Common myeloid progenitor, CD34-positive (primary cell): ENCODE measurements at regions of chr1 and their contacts with region 1.

Region 1: DNA sequence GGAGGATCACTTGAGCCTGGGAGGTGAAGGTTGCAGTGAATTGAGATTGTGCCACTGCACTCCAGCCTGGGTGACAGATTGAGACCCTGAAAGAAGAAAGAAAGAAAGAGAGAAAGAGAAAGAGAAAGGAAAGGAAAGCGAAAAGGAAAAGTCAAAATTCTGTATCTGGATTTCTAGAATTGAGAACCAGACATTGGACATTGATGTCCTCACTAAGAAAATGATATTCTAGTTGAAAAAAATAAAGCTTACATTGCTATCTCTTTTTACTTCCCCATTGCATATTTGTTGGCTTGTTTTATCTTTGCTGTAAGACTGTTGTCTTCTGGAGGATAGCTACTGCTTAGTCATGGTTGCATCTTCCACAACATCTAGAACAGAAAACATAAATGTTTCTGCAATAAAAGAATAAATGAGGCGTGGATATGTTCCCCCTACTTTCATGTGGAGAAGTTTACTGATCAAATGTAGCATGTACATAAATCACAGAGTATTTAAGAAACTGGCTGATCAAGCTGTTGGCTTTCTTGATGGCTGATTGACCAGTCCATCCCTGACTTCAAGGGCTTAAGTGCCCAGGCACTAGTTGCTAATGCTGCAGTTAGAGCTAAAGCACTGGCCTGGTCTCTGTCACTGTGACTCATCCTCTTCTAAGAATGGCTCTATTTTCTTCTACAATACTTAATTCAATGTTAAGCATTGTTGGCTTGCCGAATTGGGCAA is 17.7 kb downstream of the CD53 start:
- DNase-seq: peak in 2 of 3 donors; percentile 52 to 74
- H3K4me3 ChIP-seq: peak overlapping the region in 1 of 7 experiments; percentile 2
- H3K27ac ChIP-seq: peak overlapping the region in 1 of 2 experiments; percentile 50
- H3K4me1 ChIP-seq: peaks cover 3 to 16% (median 8%) of the 10 kb centered on the region in 4 experiments
- H3K27me3 ChIP-seq: no peaks in the 10 kb centered on the region

Region 2: DNA sequence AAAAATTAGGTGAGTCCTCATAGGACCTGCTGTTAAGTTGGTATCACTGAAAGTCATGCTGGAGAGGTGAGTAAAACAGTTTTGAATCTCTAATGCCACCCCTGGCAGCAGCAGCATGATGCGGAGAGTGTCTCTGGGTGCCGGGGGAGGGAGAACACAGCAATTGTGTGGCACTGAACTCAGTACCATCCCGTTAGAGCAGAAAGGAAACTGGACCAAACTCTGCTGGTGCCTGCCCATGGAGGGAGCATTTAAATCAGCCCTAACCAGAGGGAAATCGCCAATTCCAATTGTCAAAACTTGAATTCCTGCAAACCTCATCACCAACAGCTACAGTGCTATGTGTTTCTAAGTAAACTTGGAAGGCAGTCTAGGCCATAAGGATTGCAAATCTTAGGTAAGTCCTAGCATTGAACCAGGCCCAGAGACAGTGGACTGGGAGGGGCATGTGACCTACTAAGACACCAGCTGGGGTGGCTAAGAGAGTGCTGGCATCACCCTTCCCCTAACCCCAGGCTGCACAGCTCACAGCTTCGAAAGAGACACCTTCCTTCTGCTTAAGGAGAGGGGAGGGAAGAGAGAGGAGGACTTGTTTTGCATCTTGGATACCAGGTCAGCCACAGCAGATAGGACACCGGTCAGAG is 12.3 kb after region 1 on chr1:
- CTCF ChIA-PET with region 1: interaction called, 12 read pairs
- POLR2A ChIA-PET with region 1: no interaction called
- DNase-seq: no peak
- H3K4me3 ChIP-seq: no peak overlapping the region
- H3K27ac ChIP-seq: no peak overlapping the region
- H3K4me1 ChIP-seq: no peaks in the 10 kb centered on the region
- H3K27me3 ChIP-seq: no peaks in the 10 kb centered on the region